Posterior cingulate gyrus (tissue), 11 donors: ENCODE measurements at regions of chr15 and their contacts with region 1.

Region 1: GRCh38 chr15:95266451-95267061 is 1035.2 kb downstream of the MCTP2 start:
- DNase-seq: no peak

Region 2: DNA sequence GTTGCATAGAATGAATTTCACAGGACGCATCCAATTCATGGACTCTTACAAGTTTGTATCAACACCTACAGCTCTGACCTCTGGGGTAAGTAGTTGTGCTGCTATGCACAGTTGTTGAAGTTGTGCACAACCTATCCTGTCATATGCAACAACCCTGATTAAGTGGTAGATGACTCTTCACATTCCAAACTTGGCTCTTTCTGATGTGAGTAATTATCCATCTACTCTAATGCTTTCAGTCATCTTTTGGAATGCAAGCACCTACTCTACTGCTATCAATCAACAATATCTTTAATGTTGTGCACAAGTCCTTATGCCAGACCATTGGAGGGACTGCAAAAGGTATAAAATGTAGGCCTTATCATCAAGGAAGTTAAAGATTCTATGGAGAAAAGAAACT is 113.8 kb before region 1 on chr15:
- intact Hi-C with region 1: no loop called
- DNase-seq: no peak

Region 3: DNA sequence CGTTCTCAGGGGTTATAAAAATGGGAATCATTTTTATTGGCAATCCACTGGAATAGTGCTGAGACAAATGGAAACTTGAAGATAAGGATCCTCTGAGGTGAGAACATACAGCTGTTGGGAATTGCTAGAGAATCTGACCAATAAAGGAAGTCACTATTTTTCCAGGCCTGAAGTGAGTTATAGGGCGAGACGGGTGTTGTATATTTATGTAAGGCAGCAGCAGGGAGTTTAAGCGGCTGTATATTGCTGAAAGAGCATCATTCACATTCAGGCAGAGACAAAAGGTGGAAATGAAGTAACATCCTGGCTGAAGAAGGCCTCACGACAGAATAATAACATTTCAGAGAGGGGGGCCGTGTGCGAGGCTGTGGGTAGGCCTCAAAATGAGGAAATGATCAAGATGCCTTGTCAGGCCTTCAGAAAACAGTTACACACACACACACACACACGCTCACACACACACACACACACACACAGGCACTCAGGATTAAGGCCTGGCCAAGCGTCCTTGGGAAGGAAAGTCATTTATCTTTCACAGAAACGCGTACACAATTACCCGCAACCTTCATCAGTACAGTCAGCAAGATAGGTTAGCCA is 99.1 kb after region 1 on chr15:
- intact Hi-C with region 1: no loop called
- DNase-seq: no peak

Region 4: GRCh38 chr15:96336642-96337364 is 1070.2 kb after region 1 on chr15:
- intact Hi-C with region 1: loop called (anchors 5 kb)
- DNase-seq: no peak